Upper lobe of right lung (tissue), 1 donor: ENCODE measurements at regions of chr11 and their contacts with region 1.

Region 1: DNA sequence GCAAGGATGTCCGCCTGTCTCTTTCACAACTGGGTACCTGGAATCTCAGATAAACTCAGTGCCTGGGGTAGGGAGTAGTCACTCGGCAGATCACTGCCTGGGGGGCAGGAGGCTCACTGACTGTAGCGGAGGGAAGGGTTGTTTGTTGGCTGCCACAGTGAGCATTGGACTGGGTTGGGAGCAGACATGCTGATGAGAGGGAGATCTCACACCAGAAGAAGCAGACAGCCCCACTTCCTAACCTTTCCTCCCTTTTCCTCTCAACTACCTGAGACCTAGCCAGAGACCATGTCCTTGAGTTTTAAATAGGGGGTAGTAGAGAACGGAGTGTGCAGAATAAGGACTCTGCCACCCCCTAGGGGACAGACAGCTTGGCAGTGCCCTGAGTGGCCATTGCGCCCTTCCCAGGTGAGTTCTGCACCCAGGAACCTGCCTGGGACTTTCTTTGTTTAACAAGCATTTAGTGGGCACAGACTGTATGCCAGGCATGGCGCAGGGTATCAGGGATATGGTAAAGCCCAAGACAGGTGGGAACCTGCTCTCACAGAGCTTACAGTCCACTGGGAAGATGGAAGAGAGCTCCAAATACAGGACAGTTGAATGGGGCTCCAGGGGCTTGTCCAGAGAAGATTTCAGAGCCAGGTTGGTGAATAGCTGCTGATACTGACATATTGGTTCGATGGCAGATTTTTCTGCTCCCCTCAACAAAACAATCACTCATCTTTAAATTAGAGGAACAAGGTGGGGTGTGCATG is 115.7 kb upstream of the NNMT start:
- DNase-seq: peak; percentile 77
- ATAC-seq: peak; percentile 72
- H3K4me3 ChIP-seq: peak overlapping the region; percentile 51
- H3K27ac ChIP-seq: peak overlapping the region; percentile 96
- H3K4me1 ChIP-seq: peaks cover 80% of the 10 kb centered on the region
- H3K27me3 ChIP-seq: no peaks in the 10 kb centered on the region
- CTCF ChIP-seq: peak; percentile 55

Region 2: DNA sequence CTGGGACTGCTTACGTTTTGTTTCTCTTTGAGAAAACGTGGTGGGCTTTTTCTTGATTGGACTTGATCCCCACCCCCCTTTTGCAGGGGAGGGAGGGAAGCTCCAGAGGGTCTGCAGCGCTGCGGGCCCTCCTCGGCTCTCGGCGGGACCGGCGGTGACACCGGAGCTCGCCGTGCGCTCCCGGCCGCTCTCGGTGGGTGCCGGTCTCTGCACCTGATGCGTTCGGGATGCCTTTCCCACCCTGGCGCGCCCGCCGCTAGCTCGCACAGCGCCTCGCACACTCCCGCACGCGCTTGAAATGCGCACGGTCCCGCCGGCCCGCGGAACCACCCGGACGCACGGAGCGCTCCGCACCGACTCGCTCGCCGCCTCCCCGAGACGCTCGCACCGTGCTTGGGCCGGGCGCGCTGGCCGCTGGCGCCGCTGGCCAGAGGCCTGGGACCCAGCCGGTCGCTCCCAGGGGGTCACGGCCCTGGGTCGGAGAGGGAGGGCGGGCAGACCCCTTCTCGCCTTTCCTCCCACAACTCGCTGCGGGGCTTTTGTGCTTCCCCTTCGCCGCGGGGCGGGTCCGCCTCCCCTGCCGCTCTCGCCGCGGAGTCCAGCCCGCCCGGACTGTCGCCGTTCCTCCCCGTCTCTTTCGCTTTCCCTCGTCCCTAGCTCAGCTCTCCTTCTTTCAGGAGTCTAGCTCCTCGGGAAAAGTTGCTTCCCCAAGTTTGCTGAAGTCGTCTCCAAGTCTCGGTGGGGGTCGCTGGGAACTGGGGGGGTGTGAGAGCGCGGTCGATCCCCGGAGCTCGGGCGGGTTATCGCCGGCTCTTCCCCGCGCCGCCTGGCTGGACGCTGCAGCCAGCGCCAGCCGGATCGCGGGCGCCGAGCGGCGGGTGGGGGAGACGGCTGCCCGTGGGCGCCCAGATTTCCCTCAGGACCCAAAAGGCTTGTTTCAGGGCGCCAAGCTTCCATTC is 119.8 kb before region 1 on chr11:
- intact Hi-C with region 1: loop called (anchors 10 kb)
- DNase-seq: peak; percentile 76
- ATAC-seq: peak; percentile 7
- H3K4me3 ChIP-seq: peak overlapping the region; percentile 95
- H3K27ac ChIP-seq: peak overlapping the region; percentile 98
- H3K4me1 ChIP-seq: peaks cover 50% of the 10 kb centered on the region
- H3K27me3 ChIP-seq: no peaks in the 10 kb centered on the region
- CTCF ChIP-seq: no peak

Region 3: DNA sequence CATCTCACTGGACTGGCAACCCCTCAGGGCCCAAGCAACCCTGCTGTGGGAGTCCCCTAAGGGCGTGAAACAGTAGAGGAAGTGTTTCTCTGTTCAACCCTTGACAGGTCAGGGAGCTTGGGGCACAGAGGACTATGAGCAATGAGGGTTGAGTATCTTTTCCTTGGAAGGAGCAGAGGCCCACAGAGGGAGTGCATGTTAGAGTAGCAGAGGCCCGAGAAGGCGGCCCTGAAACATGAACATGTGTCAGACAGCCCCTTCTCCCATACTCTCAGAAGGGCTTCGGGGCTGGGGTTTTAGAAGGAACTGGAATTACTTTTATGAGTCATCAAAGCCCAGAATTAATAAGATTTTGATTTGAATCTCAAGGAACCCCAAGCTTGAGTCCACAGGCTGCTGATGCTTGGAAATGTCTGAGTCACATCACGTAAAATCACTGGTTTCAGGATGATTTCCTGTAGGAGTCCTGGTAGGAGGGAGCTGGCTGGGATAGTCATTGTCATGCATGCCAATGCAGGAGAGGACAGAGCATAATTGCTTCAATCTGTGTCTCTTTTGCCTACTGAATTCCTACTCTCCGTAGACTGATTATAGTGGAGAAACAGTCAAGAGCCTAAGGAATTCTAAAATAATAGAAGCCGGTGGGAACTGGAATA is 197.3 kb after region 1 on chr11:
- intact Hi-C with region 1: no loop called
- DNase-seq: no peak
- ATAC-seq: no peak
- H3K4me3 ChIP-seq: no peak overlapping the region
- H3K27ac ChIP-seq: no peak overlapping the region
- H3K4me1 ChIP-seq: no peaks in the 10 kb centered on the region
- H3K27me3 ChIP-seq: no peaks in the 10 kb centered on the region
- CTCF ChIP-seq: no peak